T-cell (primary cell): ENCODE measurements at regions of chr12 and their contacts with region 1.

Region 1: DNA sequence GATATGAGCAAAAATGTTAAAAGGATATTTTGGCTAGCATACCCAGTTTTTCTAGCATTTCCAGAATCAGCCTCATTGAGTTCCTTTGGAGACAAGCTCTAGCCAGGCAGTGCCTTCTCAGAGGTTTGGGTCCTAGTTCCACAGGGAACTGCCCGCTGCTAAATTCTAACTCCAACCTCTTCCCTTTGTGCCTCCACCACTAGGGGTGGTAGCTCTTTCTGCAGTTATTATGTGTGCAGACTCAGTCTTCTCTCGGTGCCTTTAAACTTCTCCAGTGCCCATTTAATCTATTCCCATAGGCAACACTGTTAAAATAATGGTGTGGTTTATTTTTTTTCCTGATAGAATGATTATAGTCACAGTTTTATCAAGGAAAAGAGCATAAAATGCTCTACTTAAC is 21.5 kb upstream of the SLC25A3 start:
- DNase-seq: no peak
- ATAC-seq: no peak
- H3K4me3 ChIP-seq: no peak overlapping the region
- H3K4me3 Mint-ChIP-seq: no peak overlapping the region
- H3K27ac ChIP-seq: no peak overlapping the region
- H3K27ac Mint-ChIP-seq: no peak overlapping the region
- H3K4me1 ChIP-seq: peaks cover 0 to under 1% of the 10 kb centered on the region in 2 experiments
- H3K4me1 Mint-ChIP-seq: no peaks in the 10 kb centered on the region
- H3K27me3 ChIP-seq: no peaks in the 10 kb centered on the region
- H3K27me3 Mint-ChIP-seq: no peaks in the 10 kb centered on the region

Region 2: GRCh38 chr12:98403385-98403784 is 168.6 kb before region 1 on chr12:
- CTCF ChIA-PET with region 1: no interaction called
- POLR2A ChIA-PET with region 1: interaction called in 1 of 2 experiments, 18 read pairs
- DNase-seq: no peak
- ATAC-seq: no peak
- H3K4me3 ChIP-seq: no peak overlapping the region
- H3K4me3 Mint-ChIP-seq: no peak overlapping the region
- H3K27ac ChIP-seq: no peak overlapping the region
- H3K27ac Mint-ChIP-seq: no peak overlapping the region
- H3K4me1 ChIP-seq: peaks cover 0 to 6% of the 10 kb centered on the region in 2 experiments
- H3K4me1 Mint-ChIP-seq: peaks cover 15 to 26% (median 21%) of the 10 kb centered on the region in 3 donors
- H3K27me3 ChIP-seq: no peaks in the 10 kb centered on the region
- H3K27me3 Mint-ChIP-seq: no peaks in the 10 kb centered on the region

Region 3: DNA sequence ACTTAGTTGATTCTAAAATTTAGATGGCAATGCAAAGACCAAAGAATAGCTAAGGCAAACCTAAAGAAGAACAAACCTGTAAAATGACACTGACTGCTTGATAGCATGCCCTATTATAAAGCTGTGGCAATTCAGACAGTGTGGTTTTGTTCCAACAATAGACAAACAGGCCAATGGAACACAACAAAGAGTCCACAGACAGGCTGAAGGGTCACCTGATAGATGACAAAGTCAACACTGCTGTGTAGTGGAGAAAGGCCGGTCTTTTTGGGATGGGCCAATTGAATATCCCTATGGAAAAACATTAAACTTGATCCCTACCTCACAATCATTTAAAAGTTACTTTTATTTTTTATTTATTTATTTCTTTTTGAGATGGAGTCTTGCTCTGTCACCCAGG is 12.3 kb before region 1 on chr12:
- CTCF ChIA-PET with region 1: no interaction called
- POLR2A ChIA-PET with region 1: interaction called in 1 of 2 experiments, 10 read pairs
- DNase-seq: no peak
- ATAC-seq: no peak
- H3K4me3 ChIP-seq: no peak overlapping the region
- H3K4me3 Mint-ChIP-seq: no peak overlapping the region
- H3K27ac ChIP-seq: no peak overlapping the region
- H3K27ac Mint-ChIP-seq: no peak overlapping the region
- H3K4me1 ChIP-seq: no peaks in the 10 kb centered on the region
- H3K4me1 Mint-ChIP-seq: no peaks in the 10 kb centered on the region
- H3K27me3 ChIP-seq: no peaks in the 10 kb centered on the region
- H3K27me3 Mint-ChIP-seq: no peaks in the 10 kb centered on the region

Region 4: GRCh38 chr12:98593351-98594049 is 21.5 kb after region 1 on chr12 and contains the start of gene SLC25A3:
- CTCF ChIA-PET with region 1: interaction called in 1 of 2 experiments, 20 read pairs
- POLR2A ChIA-PET with region 1: interaction called in 1 of 2 experiments, 19 read pairs
- DNase-seq: peak; percentile 82 to 99 (median 93)
- ATAC-seq: peak; percentile 96 to 98 (median 98)
- H3K4me3 ChIP-seq: peak within 1 kb of the TSS; percentile 85 to 97
- H3K4me3 Mint-ChIP-seq: peak within 1 kb of the TSS; percentile 90 to 95 (median 91)
- H3K27ac ChIP-seq: peak within 1 kb of the TSS; percentile 94
- H3K27ac Mint-ChIP-seq: peak within 1 kb of the TSS; percentile 95 to 99
- H3K4me1 ChIP-seq: peaks cover 18 to 21% of the 10 kb centered on the region in 2 experiments
- H3K4me1 Mint-ChIP-seq: peaks cover 27 to 43% (median 35%) of the 10 kb centered on the region in 3 donors
- H3K27me3 ChIP-seq: no peaks in the 10 kb centered on the region
- H3K27me3 Mint-ChIP-seq: no peaks in the 10 kb centered on the region
- total RNA-seq, gene SLC25A3: 256 to 438 (median 269) TPM

Region 5: GRCh38 chr12:98653866-98654493 is 82.0 kb after region 1 on chr12:
- CTCF ChIA-PET with region 1: interaction called, 27 to 34 read pairs
- POLR2A ChIA-PET with region 1: interaction called in 1 of 2 experiments, 3 read pairs
- DNase-seq: peak in 4 of 35 experiments; percentile 12 to 73 (median 18)
- ATAC-seq: peak in 3 of 4 experiments; percentile 37 to 63 (median 49)
- H3K4me3 ChIP-seq: no peak overlapping the region
- H3K4me3 Mint-ChIP-seq: no peak overlapping the region
- H3K27ac ChIP-seq: no peak overlapping the region
- H3K27ac Mint-ChIP-seq: no peak overlapping the region
- H3K4me1 ChIP-seq: no peaks in the 10 kb centered on the region
- H3K4me1 Mint-ChIP-seq: peaks cover 13 to 16% (median 14%) of the 10 kb centered on the region in 3 donors
- H3K27me3 ChIP-seq: no peaks in the 10 kb centered on the region
- H3K27me3 Mint-ChIP-seq: no peaks in the 10 kb centered on the region

Region 6: GRCh38 chr12:98678259-98678945 is 106.4 kb after region 1 on chr12:
- CTCF ChIA-PET with region 1: interaction called in 1 of 2 experiments, 6 read pairs
- POLR2A ChIA-PET with region 1: interaction called in 1 of 2 experiments, 15 read pairs
- DNase-seq: no peak
- ATAC-seq: no peak
- H3K4me3 ChIP-seq: no peak overlapping the region
- H3K4me3 Mint-ChIP-seq: no peak overlapping the region
- H3K27ac ChIP-seq: no peak overlapping the region
- H3K27ac Mint-ChIP-seq: no peak overlapping the region
- H3K4me1 ChIP-seq: no peaks in the 10 kb centered on the region
- H3K4me1 Mint-ChIP-seq: no peaks in the 10 kb centered on the region
- H3K27me3 ChIP-seq: no peaks in the 10 kb centered on the region
- H3K27me3 Mint-ChIP-seq: no peaks in the 10 kb centered on the region